K562 (cell line): ENCODE measurements at regions of chr14 and their contacts with region 1.

Region 1: GRCh38 chr14:67111022-67111421 is 78.2 kb upstream of the GARIN2 start:
- DNase-seq: no peak
- ATAC-seq: no peak
- H3K4me3 ChIP-seq: no peak overlapping the region
- H3K27ac ChIP-seq: no peak overlapping the region
- H3K4me1 ChIP-seq: no peaks in the 10 kb centered on the region
- H3K27me3 ChIP-seq: no peaks in the 10 kb centered on the region
- CTCF ChIP-seq: no peak
- EP300 ChIP-seq: no peak
- POLR2A ChIP-seq: no peak
- RAD21 ChIP-seq: no peak

Region 2: GRCh38 chr14:66359500-66359899 is 751.5 kb before region 1 on chr14:
- CTCF ChIA-PET with region 1: no interaction called
- POLR2A ChIA-PET with region 1: no interaction called
- in situ Hi-C with region 1: loop called (anchors 25 kb)
- intact Hi-C with region 1: no loop called
- DNase-seq: peak; percentile 6 to 24 (median 6)
- ATAC-seq: no peak
- H3K4me3 ChIP-seq: no peak overlapping the region
- H3K27ac ChIP-seq: no peak overlapping the region
- H3K4me1 ChIP-seq: no peaks in the 10 kb centered on the region
- H3K27me3 ChIP-seq: no peaks in the 10 kb centered on the region
- CTCF ChIP-seq: peak in 2 of 3 experiments; percentile 5 to 44; a peak in 2 of 6 replicates
- EP300 ChIP-seq: no peak
- POLR2A ChIP-seq: no peak
- RAD21 ChIP-seq: peak; percentile 22 to 31

Region 3: GRCh38 chr14:66624299-66624937 is 486.6 kb before region 1 on chr14:
- CTCF ChIA-PET with region 1: no interaction called
- POLR2A ChIA-PET with region 1: no interaction called
- in situ Hi-C with region 1: loop called (anchors 25 kb)
- intact Hi-C with region 1: loop called (anchors 5 kb)
- DNase-seq: peak; percentile 1 to 12 (median 3)
- ATAC-seq: no peak
- H3K4me3 ChIP-seq: no peak overlapping the region
- H3K27ac ChIP-seq: no peak overlapping the region
- H3K4me1 ChIP-seq: no peaks in the 10 kb centered on the region
- H3K27me3 ChIP-seq: no peaks in the 10 kb centered on the region
- CTCF ChIP-seq: peak in 2 of 3 experiments; percentile 21 to 32; a peak in 2 of 6 replicates
- EP300 ChIP-seq: no peak
- POLR2A ChIP-seq: no peak
- RAD21 ChIP-seq: 0 out of 4 replicates have a peak, but pooled peaks of 1 of the 2 experiments have one; percentile 13

Region 4: DNA sequence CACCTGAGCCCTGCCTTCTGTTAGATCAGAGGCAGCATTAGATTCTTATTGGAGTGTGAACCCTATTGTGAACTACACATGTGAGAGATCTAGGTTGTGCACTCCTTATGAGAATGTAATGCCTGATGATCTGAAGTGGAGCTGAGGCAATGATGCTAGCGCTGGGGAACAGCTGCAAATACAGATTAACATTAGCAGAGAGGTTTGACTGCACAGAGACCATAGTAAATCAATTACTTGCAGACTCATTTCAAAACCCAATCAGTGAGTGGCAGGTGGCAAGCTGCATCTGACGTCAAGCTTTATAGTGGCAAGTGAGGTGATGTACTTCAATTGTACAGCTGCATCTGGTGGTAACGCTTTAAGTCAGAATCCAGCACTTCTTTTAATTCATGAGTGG is 461.5 kb before region 1 on chr14:
- CTCF ChIA-PET with region 1: no interaction called
- POLR2A ChIA-PET with region 1: no interaction called
- in situ Hi-C with region 1: loop called (anchors 25 kb)
- intact Hi-C with region 1: no loop called
- DNase-seq: no peak
- ATAC-seq: no peak
- H3K4me3 ChIP-seq: no peak overlapping the region
- H3K27ac ChIP-seq: no peak overlapping the region
- H3K4me1 ChIP-seq: no peaks in the 10 kb centered on the region
- H3K27me3 ChIP-seq: no peaks in the 10 kb centered on the region
- CTCF ChIP-seq: no peak
- EP300 ChIP-seq: no peak
- POLR2A ChIP-seq: no peak
- RAD21 ChIP-seq: no peak